H1 (cell line): ENCODE measurements at regions of chr6 and their contacts with region 1.

Region 1: GRCh38 chr6:56570413-56571359 is 72.0 kb downstream of the DST start:
- DNase-seq: no peak
- H3K4me3 ChIP-seq: no peak overlapping the region
- H3K27ac ChIP-seq: no peak overlapping the region
- H3K4me1 ChIP-seq: no peaks in the 10 kb centered on the region
- H3K27me3 ChIP-seq: no peaks in the 10 kb centered on the region
- CTCF ChIP-seq: peak in 1 of 3 experiments; percentile 47; a peak in 2 of 4 replicates
- EP300 ChIP-seq: no peak
- POLR2A ChIP-seq: no peak
- RAD21 ChIP-seq: peak; percentile 35 to 39

Region 2: DNA sequence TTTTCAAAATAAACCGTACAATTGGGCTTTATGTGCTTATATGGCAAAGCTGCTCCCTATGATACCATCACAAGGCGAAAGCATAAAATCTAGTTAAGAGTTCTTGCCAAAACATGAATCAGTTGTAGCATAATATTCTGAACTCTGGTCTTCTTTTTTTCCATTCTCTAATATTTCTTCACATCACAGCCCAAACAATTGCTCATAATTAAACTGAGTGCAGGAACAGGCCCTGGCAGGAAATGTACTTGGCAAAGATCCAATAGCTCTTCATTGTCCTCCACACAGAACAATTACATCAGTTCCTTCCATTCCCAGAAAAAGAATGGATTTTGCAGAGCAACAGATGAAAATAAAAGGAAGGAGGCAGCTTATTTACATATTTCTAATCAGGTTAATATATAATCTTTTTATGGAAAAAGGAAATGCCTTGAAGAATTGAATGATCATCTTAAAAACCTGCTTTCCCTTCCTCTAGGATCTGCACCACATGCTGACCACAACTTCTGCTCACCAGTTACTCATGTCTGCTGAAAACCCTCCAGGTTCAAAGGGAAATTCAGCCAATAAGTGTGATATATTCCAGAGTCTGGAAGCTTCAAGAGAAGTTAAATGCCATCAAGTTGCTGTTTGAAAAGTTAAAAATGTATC is 200.0 kb before region 1 on chr6:
- CTCF ChIA-PET with region 1: interaction called, 11 read pairs
- POLR2A ChIA-PET with region 1: no interaction called
- DNase-seq: no peak
- H3K4me3 ChIP-seq: no peak overlapping the region
- H3K27ac ChIP-seq: no peak overlapping the region
- H3K4me1 ChIP-seq: no peaks in the 10 kb centered on the region; a peak in 1 of 7 replicates
- H3K27me3 ChIP-seq: no peaks in the 10 kb centered on the region
- CTCF ChIP-seq: no peak
- EP300 ChIP-seq: no peak
- POLR2A ChIP-seq: no peak
- RAD21 ChIP-seq: no peak

Region 3: DNA sequence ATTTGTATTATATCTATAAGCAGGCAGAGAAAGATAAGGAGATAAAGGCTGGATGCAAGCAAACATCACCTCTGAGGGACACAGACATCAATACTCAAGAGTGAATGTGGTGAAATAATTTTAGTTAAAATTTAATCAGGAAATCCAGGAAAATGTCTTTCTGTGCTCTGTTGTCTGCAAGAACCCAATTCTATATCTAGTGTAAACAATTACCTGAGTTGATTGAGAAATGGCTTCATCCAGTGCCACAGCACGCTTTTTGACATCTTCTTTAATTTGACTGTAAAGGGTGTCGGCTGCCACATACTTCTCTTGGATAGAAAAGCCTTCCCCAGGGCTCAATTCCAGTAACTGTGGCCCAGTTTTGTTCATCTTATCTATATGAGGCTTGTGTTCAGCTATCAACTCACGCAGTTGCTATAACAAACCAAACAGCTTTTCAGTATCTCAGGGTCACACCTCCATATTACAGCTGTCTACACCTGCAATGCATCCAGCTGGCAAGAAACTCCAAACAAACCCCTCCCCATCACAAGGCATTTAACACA is 59.6 kb before region 1 on chr6:
- CTCF ChIA-PET with region 1: interaction called, 12 read pairs
- POLR2A ChIA-PET with region 1: no interaction called
- DNase-seq: no peak
- H3K4me3 ChIP-seq: no peak overlapping the region
- H3K27ac ChIP-seq: no peak overlapping the region
- H3K4me1 ChIP-seq: no peaks in the 10 kb centered on the region
- H3K27me3 ChIP-seq: no peaks in the 10 kb centered on the region
- CTCF ChIP-seq: no peak
- EP300 ChIP-seq: no peak
- POLR2A ChIP-seq: no peak
- RAD21 ChIP-seq: no peak

Region 4: GRCh38 chr6:56555438-56555872 is 15.2 kb before region 1 on chr6:
- CTCF ChIA-PET with region 1: interaction called, 20 read pairs
- POLR2A ChIA-PET with region 1: no interaction called
- DNase-seq: no peak
- H3K4me3 ChIP-seq: no peak overlapping the region
- H3K27ac ChIP-seq: no peak overlapping the region
- H3K4me1 ChIP-seq: no peaks in the 10 kb centered on the region
- H3K27me3 ChIP-seq: no peaks in the 10 kb centered on the region
- CTCF ChIP-seq: no peak
- EP300 ChIP-seq: no peak
- POLR2A ChIP-seq: no peak
- RAD21 ChIP-seq: no peak

Region 5: DNA sequence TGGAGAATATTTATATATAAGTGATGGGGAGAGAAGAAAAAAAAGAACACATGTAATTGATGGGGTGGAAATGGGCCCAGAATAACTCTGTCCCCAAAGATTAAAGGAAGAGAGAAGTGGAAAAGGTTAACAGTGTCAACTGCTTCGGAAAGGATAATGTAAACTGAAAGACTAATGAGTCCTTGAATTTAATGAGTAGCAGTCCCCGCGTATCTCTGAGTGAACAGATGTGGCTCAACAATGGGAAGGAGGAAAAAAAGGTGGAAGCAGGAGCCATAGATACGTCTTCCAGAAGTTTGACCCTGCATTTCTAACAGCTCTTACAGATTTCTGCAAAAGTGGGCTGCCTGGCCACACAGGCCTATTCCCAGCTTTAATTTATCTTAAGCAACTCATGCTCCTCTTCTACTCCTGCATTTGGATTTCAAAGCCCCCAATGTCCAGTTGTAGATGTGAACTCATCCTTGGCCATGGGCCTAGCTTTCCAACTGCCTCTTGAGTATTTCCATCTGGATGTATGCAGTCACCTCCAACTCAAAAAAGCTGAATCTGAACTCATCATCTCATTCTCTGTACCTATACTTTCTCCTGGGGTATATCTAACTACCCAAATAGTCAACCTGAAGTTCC is 10.7 kb after region 1 on chr6:
- CTCF ChIA-PET with region 1: interaction called, 13 read pairs
- POLR2A ChIA-PET with region 1: no interaction called
- DNase-seq: no peak
- H3K4me3 ChIP-seq: no peak overlapping the region
- H3K27ac ChIP-seq: no peak overlapping the region
- H3K4me1 ChIP-seq: no peaks in the 10 kb centered on the region
- H3K27me3 ChIP-seq: no peaks in the 10 kb centered on the region
- CTCF ChIP-seq: no peak
- EP300 ChIP-seq: no peak
- POLR2A ChIP-seq: no peak
- RAD21 ChIP-seq: no peak